ENCODE measurements at regions of chr11 and their contacts with region 1.

Region 1: GRCh38 chr11:61187505-61188130 is 15.7 kb upstream of the PGA3 start:
- DNase-seq: peak in 8 of 10 donors; percentile 15 to 90 (median 74)

Region 2: DNA sequence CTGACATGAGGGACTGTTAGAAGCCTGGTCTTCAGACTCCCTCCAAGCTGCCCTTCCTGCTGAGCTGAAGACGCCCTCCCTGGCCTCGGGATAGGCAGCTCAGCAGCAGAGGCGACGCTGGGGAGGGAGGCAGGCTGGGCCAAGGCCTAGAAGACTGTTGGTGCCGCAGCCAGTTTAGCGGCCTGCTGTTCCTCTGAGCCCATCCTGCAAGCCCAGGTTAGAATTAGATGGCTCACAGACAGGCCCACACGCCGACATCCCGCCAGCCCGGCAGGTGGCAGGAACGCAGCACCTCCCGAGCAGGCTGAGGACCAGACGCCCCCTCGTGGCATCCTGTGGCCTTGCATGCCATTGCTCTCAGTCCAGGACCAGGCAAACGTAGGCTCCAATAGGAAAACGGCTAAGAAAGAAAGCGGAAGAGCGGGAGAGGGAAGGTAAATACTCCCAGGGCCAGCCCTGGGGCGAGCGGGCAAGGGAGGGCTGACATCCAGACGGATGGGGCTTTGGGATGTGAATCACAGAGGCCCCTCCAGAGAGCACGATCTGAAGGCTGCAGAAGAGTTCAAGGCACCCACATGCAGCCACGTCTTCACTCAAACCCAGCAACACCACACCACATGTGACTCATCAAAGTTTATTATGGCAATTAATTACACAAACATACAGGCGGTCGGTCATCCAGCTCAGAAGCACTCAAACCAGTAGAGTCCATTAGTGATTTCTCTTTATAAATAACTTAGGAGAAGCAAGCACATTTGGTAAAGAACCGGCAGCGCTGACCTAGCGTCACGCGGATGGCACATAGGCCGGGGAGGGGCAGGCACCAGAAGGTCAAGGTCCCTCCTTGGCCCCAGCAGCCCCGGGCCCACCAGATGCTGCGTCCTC is 57.7 kb before region 1 on chr11:
- intact Hi-C with region 1: loop called (anchors 2 kb)
- DNase-seq: peak; percentile 83 to 98 (median 92)